Dendritic cell treated with granulocyte-macrophage colony-stimulating factor and Interleukin-4, amounts not matched to agents 40 ng/mL and 50 ng/mL, for 4 days (primary cell): ENCODE measurements at regions of chr3 and their contacts with region 1.

Region 1: GRCh38 chr3:143895805-143896204 is 47.5 kb upstream of the SLC9A9 start:
- H3K4me3 Mint-ChIP-seq: no peak overlapping the region
- H3K27ac Mint-ChIP-seq: no peak overlapping the region
- H3K4me1 Mint-ChIP-seq: peaks cover under 1% of the 10 kb centered on the region
- H3K27me3 Mint-ChIP-seq: peaks cover 5% of the 10 kb centered on the region

Region 2: GRCh38 chr3:143951351-143951971 is 55.7 kb after region 1 on chr3:
- intact Hi-C with region 1: loop called (anchors 1 kb)
- H3K4me3 Mint-ChIP-seq: no peak overlapping the region
- H3K27ac Mint-ChIP-seq: no peak overlapping the region
- H3K4me1 Mint-ChIP-seq: no peaks in the 10 kb centered on the region
- H3K27me3 Mint-ChIP-seq: no peaks in the 10 kb centered on the region

Region 3: GRCh38 chr3:144770915-144771351 is 875.1 kb after region 1 on chr3:
- intact Hi-C with region 1: loop called (anchors 10 kb)
- H3K4me3 Mint-ChIP-seq: no peak overlapping the region
- H3K27ac Mint-ChIP-seq: no peak overlapping the region
- H3K4me1 Mint-ChIP-seq: peaks cover 8% of the 10 kb centered on the region
- H3K27me3 Mint-ChIP-seq: no peaks in the 10 kb centered on the region